Cardiac septum (tissue), 1 donor: ENCODE measurements at regions of chr19 and their contacts with region 1.

Region 1: GRCh38 chr19:16111160-16111908 is at the start of gene RAB8A:
- DNase-seq: peak; percentile 100
- total RNA-seq, gene RAB8A: 17.8 TPM

Region 2: GRCh38 chr19:15944401-15944800 is 166.9 kb before region 1 on chr19:
- intact Hi-C with region 1: no loop called
- DNase-seq: no peak

Region 3: DNA sequence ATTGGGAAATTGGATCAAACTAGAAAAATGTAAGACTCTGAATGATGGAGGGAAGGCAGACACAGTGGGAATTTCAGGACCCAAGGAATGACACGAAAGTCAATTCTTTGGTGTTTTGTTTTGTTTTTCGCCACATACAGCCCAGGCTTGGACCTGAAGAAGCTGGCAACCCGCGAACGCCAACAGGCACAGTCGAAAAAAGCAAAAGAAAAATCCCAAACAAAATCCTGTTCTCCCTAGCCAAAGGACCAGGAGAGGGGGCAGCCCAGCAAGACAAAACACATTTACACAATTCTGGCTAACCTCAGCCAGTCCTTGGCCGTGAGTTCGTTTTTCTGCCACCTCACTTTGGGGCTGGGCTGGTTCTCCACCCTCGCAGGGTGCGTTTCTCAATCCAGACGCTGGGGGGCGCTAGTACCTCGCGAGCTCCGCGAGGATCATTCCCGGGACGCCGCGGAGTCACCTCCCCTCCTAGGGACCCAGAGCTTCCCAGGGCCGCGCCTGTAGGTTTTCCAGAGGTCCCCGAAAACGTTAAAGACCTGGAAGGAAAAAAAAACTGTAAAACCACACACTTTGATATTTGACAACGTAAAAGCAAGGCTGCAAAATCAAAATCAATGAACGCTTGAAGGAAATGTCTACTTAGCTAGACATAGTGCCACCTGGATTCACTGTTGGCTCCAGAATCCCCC is 69.9 kb before region 1 on chr19:
- intact Hi-C with region 1: loop called (anchors 5 kb)
- DNase-seq: peak; percentile 93

Region 4: GRCh38 chr19:16078772-16079645 is 32.3 kb before region 1 on chr19:
- intact Hi-C with region 1: loop called (anchors 2 kb)
- DNase-seq: peak; percentile 85

Region 5: DNA sequence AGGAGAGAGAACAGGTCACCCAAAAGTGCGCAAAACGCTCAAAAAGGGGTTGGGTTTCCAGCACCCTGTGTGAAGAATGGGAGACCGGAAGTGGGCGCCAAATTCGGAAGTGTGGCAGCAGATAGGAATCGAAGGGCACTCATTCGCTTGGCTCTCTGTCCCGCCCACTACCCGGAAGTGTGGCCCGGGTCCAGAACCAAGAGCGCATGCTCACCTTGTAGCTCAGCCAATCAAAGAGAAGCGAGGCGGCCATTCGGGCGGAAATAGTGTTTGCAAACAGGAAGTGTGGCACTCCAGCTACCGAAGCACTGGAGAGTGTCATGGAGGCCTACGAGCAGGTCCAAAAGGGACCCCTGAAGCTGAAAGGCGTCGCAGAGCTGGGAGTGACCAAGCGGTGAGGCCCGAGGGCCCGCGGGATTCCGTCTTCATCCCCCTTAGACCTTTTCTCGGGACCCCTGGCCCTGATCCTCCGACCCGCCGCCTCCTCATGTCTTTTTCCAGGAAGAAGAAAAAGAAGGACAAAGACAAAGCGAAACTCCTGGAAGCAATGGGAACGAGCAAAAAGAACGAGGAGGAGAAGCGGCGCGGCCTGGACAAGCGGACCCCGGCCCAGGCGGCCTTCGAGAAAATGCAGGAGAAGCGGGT is 73.9 kb after region 1 on chr19 and contains the start of gene FAM32A:
- intact Hi-C with region 1: loop called (anchors 5 kb)
- DNase-seq: peak; percentile 99
- total RNA-seq, gene FAM32A: 36.9 TPM